Naive thymus-derived CD4-positive, alpha-beta T cell (primary cell): ENCODE measurements at regions of chr15 and their contacts with region 1.

Region 1: DNA sequence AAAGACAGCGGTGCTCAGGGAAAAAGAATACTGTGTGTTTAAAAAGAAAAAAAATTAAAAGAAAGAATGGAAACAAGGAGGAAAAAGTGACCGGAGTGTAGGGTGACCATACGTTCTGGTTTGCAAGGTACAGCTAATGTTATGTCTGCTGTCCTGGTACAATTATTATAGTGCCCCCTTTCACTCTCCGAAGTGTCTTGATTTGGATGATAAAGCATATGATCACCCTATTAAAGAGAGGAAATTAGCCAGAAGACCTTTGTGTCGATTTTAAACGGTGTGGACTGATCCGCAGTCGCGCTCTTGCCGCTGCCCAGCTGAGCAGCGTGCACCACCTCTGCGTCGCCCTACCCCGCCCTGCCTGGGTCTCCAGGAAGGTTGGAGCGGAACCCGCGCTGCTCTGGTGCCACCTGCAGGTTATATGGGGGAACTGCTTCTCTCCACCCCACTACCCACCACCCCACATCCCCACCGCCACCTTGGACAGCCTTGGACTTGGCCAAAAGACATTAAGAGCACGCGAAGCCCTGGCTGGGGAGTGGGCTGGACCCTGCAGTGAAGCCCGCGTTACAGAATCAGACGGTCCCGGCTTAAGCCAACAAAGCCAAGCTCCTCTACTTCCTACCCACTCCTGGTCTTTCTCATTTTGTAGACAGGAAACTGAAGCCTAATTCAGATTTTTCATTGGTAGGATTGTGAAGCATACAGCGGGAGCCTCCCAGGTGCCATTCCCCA is 41.2 kb upstream of the UBE2Q2 start:
- DNase-seq: peak; percentile 58 to 82 (median 72)
- ATAC-seq: peak; percentile 100
- H3K4me3 ChIP-seq: no peak overlapping the region
- H3K4me3 Mint-ChIP-seq: peak overlapping the region in 9 of 10 donors; percentile 21 to 81 (median 58)
- H3K27ac ChIP-seq: no peak overlapping the region
- H3K27ac Mint-ChIP-seq: peak overlapping the region in 1 of 9 donors; percentile 76
- H3K4me1 ChIP-seq: no peaks in the 10 kb centered on the region
- H3K4me1 Mint-ChIP-seq: peaks cover 4 to 10% (median 7%) of the 10 kb centered on the region in 7 donors
- H3K27me3 ChIP-seq: no peaks in the 10 kb centered on the region
- H3K27me3 Mint-ChIP-seq: peaks cover 46 to 63% (median 49%) of the 10 kb centered on the region in 5 donors

Region 2: GRCh38 chr15:74750751-74751150 is 1051.3 kb before region 1 on chr15:
- CTCF ChIA-PET with region 1: no interaction called
- POLR2A ChIA-PET with region 1: no interaction called
- intact Hi-C with region 1: no loop called
- DNase-seq: no peak
- ATAC-seq: no peak
- H3K4me3 ChIP-seq: no peak overlapping the region
- H3K4me3 Mint-ChIP-seq: no peak overlapping the region
- H3K27ac ChIP-seq: no peak overlapping the region
- H3K27ac Mint-ChIP-seq: no peak overlapping the region
- H3K4me1 ChIP-seq: no peaks in the 10 kb centered on the region
- H3K4me1 Mint-ChIP-seq: peaks cover 0 to 2% (median 0%) of the 10 kb centered on the region in 7 donors
- H3K27me3 ChIP-seq: no peaks in the 10 kb centered on the region
- H3K27me3 Mint-ChIP-seq: peaks cover 0 to 7% (median 0%) of the 10 kb centered on the region in 5 donors

Region 3: GRCh38 chr15:74869726-74870407 is 932.2 kb before region 1 on chr15:
- CTCF ChIA-PET with region 1: no interaction called
- POLR2A ChIA-PET with region 1: no interaction called
- intact Hi-C with region 1: no loop called
- DNase-seq: peak in 1 of 9 donors; percentile 48
- ATAC-seq: peak; percentile 8
- H3K4me3 ChIP-seq: peak overlapping the region; percentile 12
- H3K4me3 Mint-ChIP-seq: peak overlapping the region; percentile 72 to 100 (median 88)
- H3K27ac ChIP-seq: peak overlapping the region; percentile 64
- H3K27ac Mint-ChIP-seq: peak overlapping the region; percentile 60 to 99 (median 90)
- H3K4me1 ChIP-seq: peaks cover 62 to 63% of the 10 kb centered on the region in 2 donors
- H3K4me1 Mint-ChIP-seq: peaks cover 53 to 86% (median 74%) of the 10 kb centered on the region in 7 donors
- H3K27me3 ChIP-seq: no peaks in the 10 kb centered on the region
- H3K27me3 Mint-ChIP-seq: no peaks in the 10 kb centered on the region

Region 4: DNA sequence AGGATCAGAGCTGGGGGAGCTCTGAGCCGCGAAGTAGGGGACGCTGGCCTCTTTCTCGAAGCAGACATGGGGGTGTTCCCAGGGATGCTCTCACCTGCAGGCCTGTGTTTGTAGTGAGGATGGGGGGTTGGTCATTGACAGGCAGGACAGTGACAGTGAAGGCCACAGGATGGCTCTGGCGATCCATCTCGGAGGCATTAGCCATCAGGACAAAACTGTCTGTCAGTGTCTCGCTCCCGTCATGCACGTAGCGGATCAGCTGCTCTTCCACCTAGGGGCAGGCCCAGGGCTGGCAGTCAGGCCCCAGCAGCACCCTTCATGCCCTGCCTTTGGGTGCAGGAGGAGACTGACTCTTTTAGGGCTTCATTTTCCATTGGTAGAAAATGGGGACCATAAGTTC is 117.4 kb before region 1 on chr15:
- CTCF ChIA-PET with region 1: interaction called, 3 read pairs
- POLR2A ChIA-PET with region 1: no interaction called
- intact Hi-C with region 1: loop called in 1 of 2 experiments (anchors 1 kb)
- DNase-seq: no peak
- ATAC-seq: no peak
- H3K4me3 ChIP-seq: no peak overlapping the region
- H3K4me3 Mint-ChIP-seq: no peak overlapping the region
- H3K27ac ChIP-seq: no peak overlapping the region
- H3K27ac Mint-ChIP-seq: no peak overlapping the region
- H3K4me1 ChIP-seq: no peaks in the 10 kb centered on the region
- H3K4me1 Mint-ChIP-seq: peaks cover 0 to 4% (median 0%) of the 10 kb centered on the region in 7 donors
- H3K27me3 ChIP-seq: no peaks in the 10 kb centered on the region
- H3K27me3 Mint-ChIP-seq: no peaks in the 10 kb centered on the region

Region 5: DNA sequence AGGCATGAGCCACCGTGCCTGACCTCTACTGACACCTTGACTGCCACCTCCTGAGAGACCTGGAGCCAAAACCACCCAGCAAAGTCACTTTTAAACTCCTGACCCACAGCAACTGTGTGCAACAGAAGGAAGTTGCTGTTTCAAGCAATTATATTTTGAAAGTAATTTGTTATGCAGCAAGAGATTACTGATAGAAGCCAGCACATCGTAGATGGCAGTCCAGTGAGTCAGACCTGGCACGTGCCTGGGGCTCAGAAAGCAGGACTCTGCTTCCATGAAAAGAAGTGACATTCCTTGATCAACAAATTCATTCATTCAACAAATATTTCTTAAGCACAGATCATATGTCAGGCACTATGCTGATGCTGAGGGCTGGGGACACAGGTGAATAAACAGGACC is 83.7 kb before region 1 on chr15:
- CTCF ChIA-PET with region 1: interaction called, 10 read pairs
- POLR2A ChIA-PET with region 1: no interaction called
- intact Hi-C with region 1: no loop called
- DNase-seq: no peak
- ATAC-seq: no peak
- H3K4me3 ChIP-seq: no peak overlapping the region
- H3K4me3 Mint-ChIP-seq: no peak overlapping the region
- H3K27ac ChIP-seq: no peak overlapping the region
- H3K27ac Mint-ChIP-seq: no peak overlapping the region
- H3K4me1 ChIP-seq: no peaks in the 10 kb centered on the region
- H3K4me1 Mint-ChIP-seq: peaks cover 0 to 6% (median 0%) of the 10 kb centered on the region in 7 donors
- H3K27me3 ChIP-seq: no peaks in the 10 kb centered on the region
- H3K27me3 Mint-ChIP-seq: peaks cover 17 to 31% (median 20%) of the 10 kb centered on the region in 5 donors

Region 6: DNA sequence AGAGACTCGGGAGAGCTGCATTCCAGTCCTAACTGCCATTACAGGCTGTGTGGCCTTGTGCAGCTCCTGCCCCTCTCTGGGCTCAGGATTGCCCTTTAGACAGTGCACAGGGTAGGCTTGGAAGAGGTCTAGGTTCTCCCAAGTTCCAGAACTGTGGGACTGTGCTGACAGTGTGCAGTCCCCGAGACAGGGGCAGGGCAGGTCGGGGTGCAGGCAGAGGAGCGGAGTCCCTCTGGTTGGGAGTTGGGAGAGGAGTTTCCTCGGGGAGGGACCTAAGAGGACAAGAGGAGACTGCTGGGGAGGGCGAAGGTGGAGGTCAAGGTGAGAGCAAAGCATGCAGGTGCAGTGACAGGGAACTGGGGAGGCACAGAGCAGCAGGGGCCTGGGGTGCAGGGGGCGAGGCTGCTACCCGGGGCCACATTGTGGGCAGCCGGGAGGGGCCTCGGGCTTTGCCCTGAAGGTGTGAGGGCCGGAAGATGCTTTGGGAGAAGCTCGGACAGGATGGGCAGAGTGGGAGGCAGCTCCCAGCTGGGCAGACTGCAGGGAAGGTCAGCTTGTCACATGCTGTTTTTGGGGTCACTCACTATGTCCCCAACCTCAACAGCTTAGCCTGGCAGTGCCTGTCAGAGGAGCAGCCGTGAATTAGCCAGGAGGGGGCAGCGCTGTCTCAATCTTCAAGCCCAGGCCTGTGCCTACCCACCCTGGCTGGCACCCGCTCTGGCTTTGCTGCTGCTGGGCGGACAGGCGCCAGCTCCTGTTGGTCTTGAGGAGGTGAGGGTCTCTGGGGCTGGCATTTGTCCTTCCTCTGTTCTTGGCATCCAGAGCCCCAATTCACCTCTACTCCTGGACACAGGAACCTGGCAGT is 73.9 kb before region 1 on chr15:
- CTCF ChIA-PET with region 1: interaction called, 21 read pairs
- POLR2A ChIA-PET with region 1: no interaction called
- intact Hi-C with region 1: loop called (anchors 1 kb)
- DNase-seq: peak; percentile 52 to 71 (median 62)
- ATAC-seq: peak; percentile 75
- H3K4me3 ChIP-seq: no peak overlapping the region
- H3K4me3 Mint-ChIP-seq: no peak overlapping the region
- H3K27ac ChIP-seq: no peak overlapping the region
- H3K27ac Mint-ChIP-seq: no peak overlapping the region
- H3K4me1 ChIP-seq: no peaks in the 10 kb centered on the region
- H3K4me1 Mint-ChIP-seq: peaks cover 4 to 15% (median 12%) of the 10 kb centered on the region in 7 donors
- H3K27me3 ChIP-seq: no peaks in the 10 kb centered on the region
- H3K27me3 Mint-ChIP-seq: peaks cover 0 to 12% (median 8%) of the 10 kb centered on the region in 5 donors